ENCODE measurements at regions of chr6 and their contacts with region 1.

Region 1: DNA sequence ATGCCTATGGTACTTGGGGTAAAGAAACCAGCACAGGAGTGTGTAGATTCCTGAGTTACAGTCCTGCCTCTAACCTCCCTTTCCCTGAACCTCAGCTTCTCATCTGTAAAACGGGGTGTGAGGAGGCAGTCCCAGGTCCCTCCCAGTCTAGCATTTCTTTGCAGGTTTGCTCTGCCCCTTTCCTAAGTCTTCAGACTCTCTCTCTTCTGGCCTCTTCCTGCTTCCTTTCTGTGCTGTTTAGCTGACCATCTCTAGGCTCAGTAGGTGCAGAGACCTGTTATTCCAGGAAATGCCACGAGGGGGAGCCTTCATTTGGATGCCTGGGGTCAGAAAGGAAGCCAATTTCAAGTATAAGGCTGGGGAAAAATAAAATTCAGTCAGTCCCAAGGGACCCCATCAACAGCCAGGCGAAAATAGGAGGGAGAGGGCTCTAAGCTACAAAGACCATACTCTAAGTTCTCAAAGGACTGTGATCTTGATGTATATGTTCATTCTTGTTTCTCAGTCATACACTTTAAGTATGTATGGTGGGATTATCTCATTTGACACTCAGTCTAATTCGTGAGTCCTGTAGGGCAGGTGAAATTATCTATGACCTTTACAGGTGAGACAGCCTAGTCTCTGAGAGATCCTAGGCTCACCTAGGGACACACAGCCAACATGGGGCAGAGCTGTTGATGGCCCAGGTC is 89.1 kb downstream of the NCR2 start:
- DNase-seq: peak; percentile 53 to 71
- ATAC-seq: peak; percentile 64 to 73
- H3K4me3 ChIP-seq: no peak overlapping the region
- H3K27ac ChIP-seq: no peak overlapping the region
- H3K4me1 ChIP-seq: peaks cover 7 to 10% of the 10 kb centered on the region in 2 donors
- H3K27me3 ChIP-seq: no peaks in the 10 kb centered on the region
- CTCF ChIP-seq: peak; percentile 77 to 88 (median 80)
- POLR2A ChIP-seq: no peak

Region 2: GRCh38 chr6:41449399-41450245 is 25.1 kb after region 1 on chr6:
- in situ Hi-C with region 1: no loop called
- intact Hi-C with region 1: loop called (anchors 2 kb)
- DNase-seq: peak in 1 of 2 donors; percentile 69
- ATAC-seq: peak; percentile 48 to 66
- H3K4me3 ChIP-seq: no peak overlapping the region
- H3K27ac ChIP-seq: peak overlapping the region; percentile 31 to 88 (median 60)
- H3K4me1 ChIP-seq: peaks cover 20 to 25% of the 10 kb centered on the region in 2 donors
- H3K27me3 ChIP-seq: no peaks in the 10 kb centered on the region
- CTCF ChIP-seq: no peak
- POLR2A ChIP-seq: no peak

Region 3: GRCh38 chr6:41505122-41506049 is 80.9 kb after region 1 on chr6:
- in situ Hi-C with region 1: no loop called
- intact Hi-C with region 1: loop called (anchors 10 kb)
- DNase-seq: peak; percentile 33 to 51
- ATAC-seq: peak; percentile 50 to 64
- H3K4me3 ChIP-seq: peak overlapping the region; percentile 40 to 50 (median 47)
- H3K27ac ChIP-seq: peak overlapping the region in 3 of 4 donors; percentile 64 to 76 (median 66)
- H3K4me1 ChIP-seq: peaks cover 6 to 21% of the 10 kb centered on the region in 2 donors
- H3K27me3 ChIP-seq: peaks cover 21 to 32% (median 30%) of the 10 kb centered on the region in 3 donors
- CTCF ChIP-seq: no peak
- POLR2A ChIP-seq: no peak

Region 4: DNA sequence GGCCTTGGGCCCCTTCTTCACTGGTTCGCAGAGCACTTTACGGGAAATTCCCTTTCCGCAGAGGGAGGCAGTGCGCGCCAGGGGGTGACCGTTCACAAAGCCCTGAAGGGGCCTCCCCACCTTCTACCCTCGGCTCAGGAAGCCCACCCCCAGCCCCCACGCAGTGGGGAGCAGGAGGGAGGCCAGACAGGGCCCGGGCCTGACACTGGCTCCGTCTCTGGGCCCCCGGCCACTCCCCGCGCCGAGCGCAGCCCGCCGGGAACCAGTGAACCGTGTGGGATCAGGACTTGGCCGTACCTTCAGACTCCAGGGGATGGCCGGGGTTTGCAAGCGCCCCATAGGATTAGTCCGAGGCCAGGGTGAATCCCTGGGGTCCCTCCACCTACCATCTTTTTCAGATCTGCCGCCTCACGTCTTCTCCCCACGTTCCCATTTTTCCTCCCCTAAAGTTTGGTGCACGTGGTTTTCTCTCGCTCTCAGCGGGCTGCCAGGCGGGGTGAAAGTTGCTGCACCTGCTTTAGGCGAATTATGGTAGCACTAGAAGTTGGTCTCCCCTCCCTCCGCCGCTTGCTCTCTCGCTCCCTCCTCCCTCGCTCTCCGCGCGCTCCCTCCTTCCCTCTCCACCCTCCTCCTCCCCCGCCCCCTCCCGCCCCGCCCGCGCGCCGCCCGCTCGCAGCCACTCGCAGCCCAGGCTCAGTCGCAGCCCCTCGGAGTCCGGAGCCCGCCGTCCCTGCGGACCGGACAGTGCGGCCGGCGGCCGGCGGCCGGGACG is 121.4 kb after region 1 on chr6 and contains the start of gene FOXP4:
- in situ Hi-C with region 1: no loop called
- intact Hi-C with region 1: loop called (anchors 5 kb)
- DNase-seq: peak; percentile 86 to 87
- ATAC-seq: peak; percentile 90 to 91
- H3K4me3 ChIP-seq: peak within 1 kb of the TSS; percentile 64 to 82 (median 69)
- H3K27ac ChIP-seq: peak within 1 kb of the TSS; percentile 72 to 89 (median 79)
- H3K4me1 ChIP-seq: peaks cover 21 to 45% of the 10 kb centered on the region in 2 donors
- H3K27me3 ChIP-seq: no peaks in the 10 kb centered on the region
- CTCF ChIP-seq: no peak
- POLR2A ChIP-seq: no peak
- total RNA-seq, gene FOXP4: 3.4 to 11.4 (median 6.5) TPM

Region 5: GRCh38 chr6:41591859-41592502 is 167.5 kb after region 1 on chr6:
- in situ Hi-C with region 1: loop called (anchors 5 to 10 kb)
- intact Hi-C with region 1: loop called (anchors 1 kb)
- DNase-seq: peak; percentile 32 to 59
- ATAC-seq: peak; percentile 80 to 88
- H3K4me3 ChIP-seq: no peak overlapping the region
- H3K27ac ChIP-seq: no peak overlapping the region
- H3K4me1 ChIP-seq: no peaks in the 10 kb centered on the region
- H3K27me3 ChIP-seq: no peaks in the 10 kb centered on the region
- CTCF ChIP-seq: peak; percentile 90 to 95 (median 92)
- POLR2A ChIP-seq: no peak

Region 6: DNA sequence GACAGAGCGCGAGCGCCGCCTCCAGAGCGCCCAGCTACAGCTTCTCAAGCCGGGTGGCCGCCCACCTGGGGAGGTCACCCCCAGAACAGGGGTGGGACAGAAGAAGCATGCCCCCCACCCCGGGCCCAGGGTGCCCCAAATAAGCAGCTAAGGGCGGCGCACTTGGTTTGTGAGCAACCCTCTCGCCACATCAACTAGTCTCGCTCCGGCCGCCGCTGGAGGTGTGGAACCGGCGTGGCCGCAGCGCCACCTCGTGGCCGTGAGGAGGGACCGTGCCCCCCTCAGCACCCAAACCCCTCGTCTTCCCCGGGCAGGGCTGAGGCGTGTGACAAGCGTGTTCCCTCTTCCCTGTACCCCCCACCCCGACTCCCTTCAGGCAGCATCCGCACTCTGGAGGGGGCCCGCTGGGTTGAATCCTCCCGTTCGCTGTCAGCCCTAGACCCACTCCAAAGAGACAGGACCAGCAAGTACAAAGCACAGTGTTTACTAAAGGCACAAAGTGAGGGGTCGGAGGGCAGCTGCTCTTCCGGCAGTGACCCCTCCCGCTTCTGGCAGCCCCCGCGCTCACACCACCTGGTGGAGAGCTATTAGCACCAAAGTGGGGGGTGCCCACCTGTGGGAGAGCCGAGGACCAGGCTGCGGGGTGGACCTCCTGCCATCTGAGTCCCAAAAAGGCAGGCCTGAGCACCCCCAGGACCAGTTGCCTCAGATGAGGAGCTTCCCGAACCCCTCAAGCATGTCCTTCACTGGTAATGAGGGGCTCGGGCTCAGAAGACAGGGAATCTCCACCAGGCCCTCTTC is 259.2 kb after region 1 on chr6:
- in situ Hi-C with region 1: no loop called
- intact Hi-C with region 1: loop called (anchors 2 kb)
- DNase-seq: peak; percentile 51 to 69
- ATAC-seq: peak; percentile 57 to 67
- H3K4me3 ChIP-seq: peak overlapping the region; percentile 40 to 61 (median 50)
- H3K27ac ChIP-seq: peak overlapping the region; percentile 52 to 67 (median 58)
- H3K4me1 ChIP-seq: peaks cover 13 to 14% of the 10 kb centered on the region in 2 donors
- H3K27me3 ChIP-seq: no peaks in the 10 kb centered on the region
- CTCF ChIP-seq: peak; percentile 78 to 95 (median 90)
- POLR2A ChIP-seq: no peak